H1 (cell line): ENCODE measurements at regions of chr3 and their contacts with region 1.

Region 1: DNA sequence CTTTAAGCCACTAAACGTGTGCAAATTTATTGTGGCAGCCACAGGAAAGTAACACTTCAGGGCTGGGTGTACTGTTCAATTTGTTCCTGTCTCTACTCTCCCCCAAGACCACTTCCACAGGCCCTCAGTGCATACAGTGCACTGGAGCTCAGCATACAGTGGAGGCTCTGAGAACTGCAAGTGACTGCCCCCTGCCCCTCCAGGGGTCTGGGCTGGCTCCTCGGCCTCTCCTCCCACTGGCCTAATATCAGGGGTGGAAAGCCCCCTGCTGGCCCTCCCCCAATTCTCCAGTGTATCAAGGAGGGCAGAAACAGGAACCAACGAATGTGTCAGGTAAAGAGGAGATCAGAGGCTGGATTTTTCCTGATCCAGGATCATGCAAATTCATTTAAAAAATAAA is 19.9 kb upstream of the HEG1 start:
- DNase-seq: peak in 1 of 2 experiments; percentile 48
- H3K4me3 ChIP-seq: no peak overlapping the region
- H3K27ac ChIP-seq: no peak overlapping the region
- H3K4me1 ChIP-seq: peaks cover 0 to 6% (median 3%) of the 10 kb centered on the region in 4 experiments; a peak in 5 of 7 replicates
- H3K27me3 ChIP-seq: no peaks in the 10 kb centered on the region
- CTCF ChIP-seq: peak in 2 of 3 experiments; percentile 17 to 27; a peak in 2 of 4 replicates
- EP300 ChIP-seq: no peak
- POLR2A ChIP-seq: no peak
- RAD21 ChIP-seq: peak; percentile 12 to 33; a peak in 2 of 4 replicates

Region 2: GRCh38 chr3:125011941-125012340 is 63.8 kb before region 1 on chr3:
- CTCF ChIA-PET with region 1: no interaction called
- POLR2A ChIA-PET with region 1: no interaction called
- DNase-seq: no peak
- H3K4me3 ChIP-seq: no peak overlapping the region
- H3K27ac ChIP-seq: no peak overlapping the region
- H3K4me1 ChIP-seq: no peaks in the 10 kb centered on the region
- H3K27me3 ChIP-seq: no peaks in the 10 kb centered on the region
- CTCF ChIP-seq: no peak
- EP300 ChIP-seq: no peak
- POLR2A ChIP-seq: no peak
- RAD21 ChIP-seq: no peak

Region 3: GRCh38 chr3:125107861-125108567 is 32.3 kb after region 1 on chr3:
- CTCF ChIA-PET with region 1: interaction called, 10 read pairs
- POLR2A ChIA-PET with region 1: no interaction called
- DNase-seq: no peak
- H3K4me3 ChIP-seq: no peak overlapping the region
- H3K27ac ChIP-seq: no peak overlapping the region
- H3K4me1 ChIP-seq: peaks cover 0 to 8% (median 0%) of the 10 kb centered on the region in 4 experiments; a peak in 1 of 7 replicates
- H3K27me3 ChIP-seq: no peaks in the 10 kb centered on the region
- CTCF ChIP-seq: no peak
- EP300 ChIP-seq: no peak
- POLR2A ChIP-seq: no peak
- RAD21 ChIP-seq: no peak